ENCODE measurements at regions of chr15 and their contacts with region 1.

Region 1: GRCh38 chr15:54917312-54917711 is 279.4 kb downstream of the RSL24D1 start:
- DNase-seq: no peak
- ATAC-seq: no peak

Region 2: GRCh38 chr15:53721334-53722087 is 1195.8 kb before region 1 on chr15:
- intact Hi-C with region 1: loop called (anchors 5 kb)
- DNase-seq: no peak
- ATAC-seq: no peak

Region 3: GRCh38 chr15:54803134-54803808 is 114.0 kb before region 1 on chr15:
- intact Hi-C with region 1: no loop called
- DNase-seq: no peak
- ATAC-seq: no peak

Region 4: DNA sequence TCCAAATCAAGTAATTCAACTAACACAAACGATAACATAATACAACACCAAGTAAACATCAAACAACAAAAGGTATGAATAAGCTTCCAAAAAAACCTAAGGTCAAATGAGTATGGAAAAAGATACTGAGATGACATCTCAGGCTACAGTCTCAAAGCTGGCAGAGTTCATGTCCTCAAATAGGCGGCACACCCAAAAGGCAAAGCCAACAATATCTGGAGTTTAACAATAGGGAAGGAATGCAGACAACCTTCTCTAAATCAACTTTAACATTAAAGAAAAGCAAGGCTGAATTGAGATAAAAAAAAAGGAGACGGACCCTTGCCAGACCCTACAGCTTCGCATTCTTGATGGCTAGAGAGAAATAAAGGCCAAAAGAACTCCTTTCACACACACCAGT is 67.2 kb before region 1 on chr15:
- intact Hi-C with region 1: no loop called
- DNase-seq: no peak
- ATAC-seq: no peak

Measured in sciatic nerve (tissue), 2 donors.